ENCODE measurements at regions of chr18 and their contacts with region 1.

Region 1: GRCh38 chr18:21452796-21453510 is 147.6 kb downstream of the ESCO1 start:
- DNase-seq: no peak
- ATAC-seq: peak; percentile 39
- H3K4me3 ChIP-seq: no peak overlapping the region
- H3K27ac ChIP-seq: no peak overlapping the region
- H3K4me1 ChIP-seq: peaks cover 5% of the 10 kb centered on the region; the same call in 1 of the 2 replicates
- H3K27me3 ChIP-seq: peaks cover 34% of the 10 kb centered on the region
- CTCF ChIP-seq: no peak
- POLR2A ChIP-seq: no peak
- RAD21 ChIP-seq: no peak

Region 2: GRCh38 chr18:21242141-21242779 is 210.7 kb before region 1 on chr18 and contains the start of gene GREB1L:
- CTCF ChIA-PET with region 1: no interaction called
- POLR2A ChIA-PET with region 1: no interaction called
- dilution Hi-C with region 1: no loop called
- in situ Hi-C with region 1: no loop called
- intact Hi-C with region 1: loop called (anchors 10 kb)
- DNase-seq: no peak
- ATAC-seq: peak; percentile 92
- H3K4me3 ChIP-seq: peak within 1 kb of the TSS; percentile 30
- H3K27ac ChIP-seq: no peak within 1 kb of the TSS
- H3K4me1 ChIP-seq: peaks cover 2% of the 10 kb centered on the region; the same call in 1 of the 2 replicates
- H3K27me3 ChIP-seq: peaks cover 50% of the 10 kb centered on the region
- CTCF ChIP-seq: peak; percentile 11; the same call in 1 of the 2 replicates
- POLR2A ChIP-seq: no peak
- RAD21 ChIP-seq: no peak
- total RNA-seq, gene GREB1L: under 0.01 TPM in 1 of 2 replicates, not detected in the other

Region 3: DNA sequence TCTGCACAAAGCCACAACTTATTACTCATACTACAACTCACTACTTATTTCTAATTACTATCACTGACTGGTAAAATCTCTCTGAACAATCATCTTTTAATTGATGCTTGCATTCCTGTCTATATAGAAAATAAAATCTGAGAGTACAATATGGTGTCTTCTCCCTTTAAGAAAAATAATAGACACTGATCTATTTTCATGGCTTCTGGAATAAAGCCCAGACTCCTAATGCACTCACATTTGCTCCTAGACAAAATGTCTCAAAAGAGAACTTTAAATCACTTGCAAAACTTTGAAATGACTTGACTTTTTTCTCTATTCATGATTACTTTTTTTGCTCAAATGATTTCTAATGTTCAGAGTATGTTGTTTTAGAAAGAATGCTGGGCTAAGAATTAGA is 118.8 kb after region 1 on chr18:
- CTCF ChIA-PET with region 1: no interaction called
- POLR2A ChIA-PET with region 1: no interaction called
- dilution Hi-C with region 1: no loop called
- in situ Hi-C with region 1: no loop called
- intact Hi-C with region 1: no loop called
- DNase-seq: no peak
- ATAC-seq: no peak
- H3K4me3 ChIP-seq: no peak overlapping the region
- H3K27ac ChIP-seq: no peak overlapping the region
- H3K4me1 ChIP-seq: 0 out of 2 replicates have a peak, but pooled peaks cover 2% of the 10 kb centered on the region
- H3K27me3 ChIP-seq: no peaks in the 10 kb centered on the region
- CTCF ChIP-seq: no peak
- POLR2A ChIP-seq: no peak
- RAD21 ChIP-seq: no peak

Region 4: GRCh38 chr18:21650311-21650710 is 197.4 kb after region 1 on chr18:
- CTCF ChIA-PET with region 1: no interaction called
- POLR2A ChIA-PET with region 1: no interaction called
- dilution Hi-C with region 1: no loop called
- in situ Hi-C with region 1: no loop called
- intact Hi-C with region 1: no loop called
- DNase-seq: no peak
- ATAC-seq: no peak
- H3K4me3 ChIP-seq: no peak overlapping the region
- H3K27ac ChIP-seq: no peak overlapping the region
- H3K4me1 ChIP-seq: no peaks in the 10 kb centered on the region
- H3K27me3 ChIP-seq: no peaks in the 10 kb centered on the region
- CTCF ChIP-seq: no peak
- POLR2A ChIP-seq: no peak
- RAD21 ChIP-seq: no peak

Measured in IMR-90 (cell line).